ENCODE measurements at regions of chr20 and their contacts with region 1.

Region 1: GRCh38 chr20:10469599-10469998 is 34.5 kb downstream of the SLX4IP start:
- DNase-seq: peak; percentile 60 to 73
- H3K4me3 ChIP-seq: no peak overlapping the region
- H3K27ac ChIP-seq: peak overlapping the region; percentile 27 to 43
- H3K4me1 ChIP-seq: peaks cover 0 to 68% (median 32%) of the 10 kb centered on the region in 4 donors
- H3K27me3 ChIP-seq: no peaks in the 10 kb centered on the region
- CTCF ChIP-seq: peak; percentile 68 to 76

Region 2: DNA sequence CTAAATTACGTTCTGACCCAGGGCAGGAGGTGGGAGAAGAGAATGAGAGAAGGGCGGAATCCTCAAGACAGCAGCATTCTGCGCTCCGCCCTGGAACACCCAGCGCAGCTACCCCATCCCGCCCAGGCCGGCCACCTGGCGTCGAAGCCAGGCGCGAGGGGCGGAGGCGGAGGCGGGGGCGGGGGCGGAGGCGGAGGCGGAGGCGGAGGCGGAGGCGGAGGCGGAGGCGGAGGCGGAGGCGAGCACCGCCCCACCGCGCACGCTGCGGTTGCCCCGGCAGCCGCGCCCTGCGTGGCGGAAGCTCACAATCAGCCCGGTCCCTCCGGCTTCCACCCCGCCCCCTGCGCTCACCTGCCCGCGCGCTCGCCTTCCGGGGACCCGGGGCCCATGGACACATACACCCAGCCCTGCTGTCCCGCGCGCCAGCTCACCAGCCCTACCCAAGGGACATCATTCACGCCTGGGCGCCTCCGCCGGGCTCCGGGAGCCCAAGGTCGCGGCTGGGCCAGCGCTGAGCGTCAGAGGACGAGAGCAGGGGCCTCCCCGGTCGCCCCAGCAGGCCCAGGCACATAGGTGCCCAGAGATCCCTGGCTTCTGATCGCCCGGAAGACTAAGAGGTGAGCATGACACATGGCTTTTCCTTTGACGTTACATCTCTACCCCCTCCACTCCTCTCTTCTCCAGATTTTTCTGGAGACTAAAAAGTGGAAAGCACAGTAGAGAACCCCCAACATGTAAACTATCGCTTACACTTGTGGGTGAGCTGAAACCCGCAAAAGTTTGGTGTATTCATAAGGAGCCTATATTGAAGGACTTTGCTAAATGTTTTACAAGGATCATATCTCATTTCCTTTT is 434.7 kb before region 1 on chr20 and contains the start of gene ANKEF1:
- intact Hi-C with region 1: no loop called
- DNase-seq: peak; percentile 44 to 80
- H3K4me3 ChIP-seq: peak within 1 kb of the TSS; percentile 50 to 64
- H3K27ac ChIP-seq: no peak within 1 kb of the TSS
- H3K4me1 ChIP-seq: peaks cover 0 to 5% (median 0%) of the 10 kb centered on the region in 4 donors
- H3K27me3 ChIP-seq: no peaks in the 10 kb centered on the region
- CTCF ChIP-seq: no peak

Region 3: GRCh38 chr20:10447027-10447426 is 22.6 kb before region 1 on chr20:
- intact Hi-C with region 1: no loop called
- DNase-seq: no peak
- H3K4me3 ChIP-seq: no peak overlapping the region
- H3K27ac ChIP-seq: no peak overlapping the region
- H3K4me1 ChIP-seq: peaks cover 0 to 6% (median 0%) of the 10 kb centered on the region in 4 donors
- H3K27me3 ChIP-seq: no peaks in the 10 kb centered on the region
- CTCF ChIP-seq: no peak

Region 4: GRCh38 chr20:10667077-10667401 is 197.4 kb after region 1 on chr20:
- intact Hi-C with region 1: loop called (anchors 2 kb)
- DNase-seq: peak; percentile 67 to 92
- H3K4me3 ChIP-seq: peak overlapping the region; percentile 88 to 90
- H3K27ac ChIP-seq: peak overlapping the region; percentile 99
- H3K4me1 ChIP-seq: peaks cover 0 to 78% (median 70%) of the 10 kb centered on the region in 4 donors
- H3K27me3 ChIP-seq: no peaks in the 10 kb centered on the region
- CTCF ChIP-seq: no peak

Region 5: GRCh38 chr20:11274141-11274594 is 804.6 kb after region 1 on chr20:
- intact Hi-C with region 1: loop called (anchors 2 kb)
- DNase-seq: peak in 1 of 2 donors; percentile 32
- H3K4me3 ChIP-seq: no peak overlapping the region
- H3K27ac ChIP-seq: no peak overlapping the region
- H3K4me1 ChIP-seq: peaks cover 0 to 10% (median 0%) of the 10 kb centered on the region in 4 donors
- H3K27me3 ChIP-seq: peaks cover 0 to 2% of the 10 kb centered on the region in 2 donors
- CTCF ChIP-seq: peak; percentile 58 to 66